CD8-positive, alpha-beta T cell (primary cell): ENCODE measurements at regions of chr17 and their contacts with region 1.

Region 1: DNA sequence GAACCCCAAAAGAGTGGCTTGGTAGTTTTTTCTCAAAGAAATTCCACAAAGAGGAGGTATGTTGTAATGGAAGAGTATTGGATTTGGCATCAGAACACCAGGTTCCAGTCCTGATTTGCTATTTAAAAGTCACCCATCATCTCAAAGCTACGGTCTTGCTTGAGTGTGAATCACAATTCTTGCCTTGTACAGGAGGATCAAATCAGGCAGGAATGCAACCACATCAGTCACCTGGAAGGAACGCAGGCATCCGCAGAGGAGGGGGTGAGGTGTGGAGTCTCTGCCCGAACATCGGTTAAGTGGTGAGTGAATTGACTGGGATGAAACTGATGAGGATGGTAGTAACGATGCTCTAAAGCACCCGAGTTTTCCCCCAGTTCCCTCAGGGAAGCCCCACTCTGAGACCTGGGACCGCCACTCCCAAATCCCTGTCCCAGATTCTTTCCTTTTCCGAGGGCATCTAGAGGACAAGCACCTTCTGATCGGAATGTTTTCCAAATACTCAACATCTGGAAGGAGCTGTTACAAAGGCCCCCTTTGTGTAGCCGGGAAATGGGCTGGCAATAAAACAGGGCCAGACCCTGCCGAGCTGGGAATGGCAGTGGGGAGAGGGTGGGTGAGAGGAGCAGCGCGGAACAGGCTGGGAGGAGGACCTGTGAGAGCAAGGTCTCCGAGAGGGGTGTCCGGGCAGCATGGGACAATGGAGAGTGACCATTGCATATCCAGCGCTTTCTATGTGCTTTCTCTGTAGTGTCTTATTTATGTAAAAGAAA is 469.6 kb downstream of the SLC39A11 start:
- DNase-seq: no peak
- ATAC-seq: no peak
- H3K4me3 ChIP-seq: no peak overlapping the region
- H3K4me3 Mint-ChIP-seq: no peak overlapping the region
- H3K27ac ChIP-seq: no peak overlapping the region
- H3K27ac Mint-ChIP-seq: no peak overlapping the region
- H3K4me1 ChIP-seq: no peaks in the 10 kb centered on the region
- H3K4me1 Mint-ChIP-seq: peaks cover 6% of the 10 kb centered on the region
- H3K27me3 ChIP-seq: no peaks in the 10 kb centered on the region
- H3K27me3 Mint-ChIP-seq: peaks cover 44% of the 10 kb centered on the region
- CTCF ChIP-seq: no peak

Region 2: DNA sequence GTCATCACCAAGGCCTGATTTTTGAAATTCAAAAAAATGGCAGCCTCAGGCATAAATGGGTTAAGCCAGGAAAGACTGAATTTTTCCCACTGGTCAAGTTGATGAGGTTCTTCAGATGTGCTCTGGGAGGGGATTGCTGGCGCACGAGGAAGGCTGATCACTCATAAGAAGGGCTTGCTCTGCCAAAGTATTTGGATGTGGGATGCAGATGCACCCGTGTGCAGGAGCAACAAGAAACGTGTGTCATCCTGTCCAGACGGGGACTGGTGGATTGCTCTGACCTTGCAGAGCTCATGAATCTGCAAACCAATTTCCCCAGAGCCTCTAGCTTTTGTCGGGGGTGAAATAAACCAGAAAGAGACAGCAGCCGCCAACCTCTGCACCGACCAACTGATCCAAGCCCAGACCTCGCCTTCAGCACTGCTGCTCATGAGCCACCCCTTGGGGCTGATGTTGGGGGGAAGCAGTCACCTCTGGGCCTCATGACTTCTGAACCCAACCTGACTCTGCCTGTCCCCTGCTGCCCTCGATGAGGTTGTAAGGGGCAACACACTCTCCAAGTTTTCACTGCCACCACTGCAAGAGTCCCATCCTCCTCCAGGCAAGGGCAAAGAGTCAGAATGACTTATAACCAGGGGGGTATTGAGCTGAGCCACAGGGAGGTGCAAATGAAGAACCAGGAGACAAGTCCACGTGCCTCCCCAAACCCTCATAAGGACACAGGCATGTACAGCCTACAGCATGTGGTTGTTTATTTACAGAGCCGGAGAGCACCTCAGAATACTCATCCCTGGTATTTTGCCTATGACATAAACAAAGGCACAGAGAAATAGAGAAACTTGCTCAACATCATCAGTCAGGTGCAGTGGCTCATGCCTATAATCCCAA is 50.0 kb before region 1 on chr17:
- CTCF ChIA-PET with region 1: no interaction called
- POLR2A ChIA-PET with region 1: no interaction called
- intact Hi-C with region 1: loop called in 1 of 2 experiments (anchors 5 kb)
- DNase-seq: no peak
- ATAC-seq: no peak
- H3K4me3 ChIP-seq: no peak overlapping the region
- H3K4me3 Mint-ChIP-seq: no peak overlapping the region
- H3K27ac ChIP-seq: no peak overlapping the region
- H3K27ac Mint-ChIP-seq: no peak overlapping the region
- H3K4me1 ChIP-seq: no peaks in the 10 kb centered on the region
- H3K4me1 Mint-ChIP-seq: no peaks in the 10 kb centered on the region
- H3K27me3 ChIP-seq: peaks cover 0 to 4% of the 10 kb centered on the region in 2 experiments
- H3K27me3 Mint-ChIP-seq: peaks cover 15% of the 10 kb centered on the region
- CTCF ChIP-seq: no peak